ENCODE measurements at regions of chr4 and their contacts with region 1.

Region 1: DNA sequence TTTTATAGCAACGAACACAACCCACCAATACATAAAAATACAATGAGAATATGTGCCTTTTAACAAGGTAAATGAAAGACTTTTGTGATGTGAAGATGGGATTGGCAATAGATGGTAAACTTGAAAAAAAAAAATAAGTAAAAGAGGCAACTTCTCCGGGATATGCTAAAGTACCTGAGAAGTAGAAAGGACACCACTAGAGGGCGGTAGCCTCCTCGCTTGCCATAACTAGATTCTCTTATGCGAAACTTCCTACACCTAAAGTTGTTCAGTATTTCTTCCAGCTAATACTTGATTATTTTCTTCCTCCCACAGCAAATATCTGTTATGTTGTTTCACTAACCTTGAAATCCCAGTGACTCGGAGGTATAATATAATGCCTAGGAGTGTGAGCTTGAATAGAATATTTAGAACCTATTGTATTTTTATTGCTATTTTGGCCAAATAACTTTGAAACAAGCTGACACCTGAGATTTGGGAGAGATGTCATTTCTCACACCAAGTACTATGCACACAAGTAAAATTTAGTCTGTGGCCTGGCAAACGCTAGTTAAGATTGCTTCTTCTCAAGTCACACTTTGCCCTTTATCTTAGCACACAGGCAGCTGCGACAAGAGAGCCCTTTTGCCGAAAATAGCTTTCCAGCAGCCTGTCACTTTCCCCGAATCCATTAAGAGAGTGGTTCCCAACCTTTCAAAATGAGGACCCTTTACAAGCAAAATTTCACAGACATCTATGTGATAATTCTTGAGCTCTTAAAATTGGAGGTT is 44.9 kb upstream of the PDLIM5 start:
- DNase-seq: peak; percentile 36
- ATAC-seq: 0 out of 2 replicates have a peak, but pooled peaks have one; percentile 70
- H3K4me3 ChIP-seq: no peak overlapping the region
- H3K27ac ChIP-seq: no peak overlapping the region
- H3K4me1 ChIP-seq: no peaks in the 10 kb centered on the region
- H3K27me3 ChIP-seq: no peaks in the 10 kb centered on the region
- CTCF ChIP-seq: peak; percentile 73; the same call in 1 of the 2 replicates

Region 2: DNA sequence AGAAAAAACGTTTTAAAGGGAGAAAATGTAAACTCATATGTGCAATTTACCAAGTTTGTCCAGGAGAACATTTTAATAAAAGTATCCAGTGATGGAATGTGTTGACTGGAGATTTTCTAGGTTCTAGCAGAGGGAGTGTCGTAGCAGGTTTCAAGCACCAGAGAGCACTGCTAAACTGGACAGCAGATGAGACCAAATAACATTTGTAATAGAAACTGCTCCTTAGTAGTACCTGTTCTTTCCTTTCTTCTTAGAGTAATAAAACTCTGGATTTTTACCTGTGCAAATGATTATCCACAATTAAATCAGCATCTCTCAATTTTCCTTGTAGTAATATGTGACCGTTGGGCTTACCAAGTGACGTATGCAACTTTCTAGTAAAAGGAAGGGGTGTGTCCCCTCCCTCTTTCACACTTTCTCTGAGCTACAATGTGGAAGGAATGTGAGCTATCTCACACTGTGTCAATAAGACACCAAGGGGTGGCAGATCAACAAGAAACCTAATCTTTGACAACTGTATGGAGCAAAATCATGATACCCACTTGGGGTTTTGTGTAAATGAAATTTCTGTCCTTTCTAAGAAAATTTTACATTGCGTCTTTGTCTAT is 73.8 kb before region 1 on chr4:
- CTCF ChIA-PET with region 1: no interaction called
- POLR2A ChIA-PET with region 1: no interaction called
- in situ Hi-C with region 1: no loop called
- intact Hi-C with region 1: no loop called
- DNase-seq: no peak
- ATAC-seq: no peak
- H3K4me3 ChIP-seq: no peak overlapping the region
- H3K27ac ChIP-seq: no peak overlapping the region
- H3K4me1 ChIP-seq: no peaks in the 10 kb centered on the region
- H3K27me3 ChIP-seq: no peaks in the 10 kb centered on the region
- CTCF ChIP-seq: peak; percentile 13; the same call in 1 of the 2 replicates

Region 3: GRCh38 chr4:94595879-94596483 is 189.1 kb after region 1 on chr4:
- CTCF ChIA-PET with region 1: no interaction called
- POLR2A ChIA-PET with region 1: no interaction called
- in situ Hi-C with region 1: no loop called
- intact Hi-C with region 1: loop called (anchors 1 kb)
- DNase-seq: peak; percentile 27
- ATAC-seq: no peak
- H3K4me3 ChIP-seq: no peak overlapping the region
- H3K27ac ChIP-seq: no peak overlapping the region
- H3K4me1 ChIP-seq: no peaks in the 10 kb centered on the region
- H3K27me3 ChIP-seq: no peaks in the 10 kb centered on the region
- CTCF ChIP-seq: peak; percentile 50; the same call in 1 of the 2 replicates